Ascending aorta (tissue), 2 donors: ENCODE measurements at regions of chr1 and their contacts with region 1.

Region 1: DNA sequence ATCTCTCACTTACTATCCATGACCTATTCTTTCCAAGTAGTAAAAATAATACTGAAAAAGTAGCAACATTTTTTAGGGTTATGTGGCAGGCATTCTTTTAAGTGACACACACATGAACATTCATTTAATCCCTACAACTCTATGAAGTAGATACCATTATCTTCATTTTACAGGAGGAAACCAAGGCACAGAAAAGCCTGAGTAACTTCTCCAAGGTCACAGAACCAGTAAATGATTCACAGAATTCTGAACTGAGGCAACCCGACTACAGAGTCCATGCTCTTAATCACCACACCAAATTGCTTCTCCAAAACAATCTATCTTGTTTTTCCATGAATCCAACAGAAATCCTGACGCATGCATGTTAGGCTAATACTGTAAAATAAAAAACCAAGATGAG is 17.5 kb downstream of the FUBP1 start:
- DNase-seq: no peak
- H3K4me3 ChIP-seq: no peak overlapping the region
- H3K27ac ChIP-seq: no peak overlapping the region
- H3K4me1 ChIP-seq: no peaks in the 10 kb centered on the region
- H3K27me3 ChIP-seq: no peaks in the 10 kb centered on the region
- CTCF ChIP-seq: no peak

Region 2: GRCh38 chr1:77718181-77718580 is 243.2 kb before region 1 on chr1:
- intact Hi-C with region 1: loop called (anchors 10 kb)
- DNase-seq: no peak
- H3K4me3 ChIP-seq: no peak overlapping the region
- H3K27ac ChIP-seq: no peak overlapping the region
- H3K4me1 ChIP-seq: no peaks in the 10 kb centered on the region
- H3K27me3 ChIP-seq: no peaks in the 10 kb centered on the region
- CTCF ChIP-seq: no peak